Left lung (tissue), 14 donors: ENCODE measurements at regions of chr6 and their contacts with region 1.

Region 1: DNA sequence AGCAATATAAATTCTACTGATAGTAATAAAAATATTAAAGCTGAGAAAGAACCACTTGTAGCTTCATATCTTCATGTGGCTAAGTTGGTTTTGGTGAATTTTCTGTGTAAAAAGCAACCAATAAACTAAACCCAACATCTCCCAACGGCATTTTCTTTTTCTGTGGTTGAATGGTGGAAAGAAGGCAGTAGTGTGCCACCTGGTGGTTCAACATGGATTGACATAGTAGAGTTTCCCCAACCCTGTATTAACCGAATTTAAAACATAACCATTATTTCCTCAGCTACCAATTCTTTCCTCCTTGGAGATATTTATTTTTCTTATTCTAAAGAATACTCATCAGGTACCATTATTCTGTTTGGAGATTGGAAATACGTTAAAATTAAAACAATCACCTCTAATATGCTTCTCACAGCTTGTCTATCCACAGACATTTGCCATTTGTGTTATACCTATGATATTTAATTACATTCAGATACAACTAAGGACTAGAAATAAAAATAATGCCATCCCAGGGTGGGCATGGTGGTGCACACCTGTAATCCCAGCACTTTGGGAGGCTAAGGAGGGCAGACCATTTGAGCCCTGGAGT is 117.1 kb upstream of the EEF1E1 start:
- DNase-seq: peak in 2 of 4 donors; percentile 25 to 46
- ATAC-seq: peak; percentile 87
- H3K4me3 ChIP-seq: no peak overlapping the region
- H3K27ac ChIP-seq: no peak overlapping the region
- H3K4me1 ChIP-seq: no peaks in the 10 kb centered on the region
- H3K27me3 ChIP-seq: peaks cover 0 to 8% of the 10 kb centered on the region in 2 donors
- CTCF ChIP-seq: peak; percentile 71 to 77

Region 2: GRCh38 chr6:8054276-8054675 is 165.2 kb before region 1 on chr6:
- intact Hi-C with region 1: no loop called
- DNase-seq: no peak
- ATAC-seq: no peak
- H3K4me3 ChIP-seq: no peak overlapping the region
- H3K27ac ChIP-seq: no peak overlapping the region
- H3K4me1 ChIP-seq: no peaks in the 10 kb centered on the region
- H3K27me3 ChIP-seq: no peaks in the 10 kb centered on the region
- CTCF ChIP-seq: no peak

Region 3: GRCh38 chr6:8131256-8131897 is 88.1 kb before region 1 on chr6:
- intact Hi-C with region 1: loop called in 1 of 2 experiments (anchors 5 kb)
- DNase-seq: peak in 2 of 4 donors; percentile 29 to 66
- ATAC-seq: peak; percentile 98
- H3K4me3 ChIP-seq: no peak overlapping the region
- H3K27ac ChIP-seq: no peak overlapping the region
- H3K4me1 ChIP-seq: peaks cover 0 to 8% of the 10 kb centered on the region in 2 donors
- H3K27me3 ChIP-seq: peaks cover 0 to 4% of the 10 kb centered on the region in 2 donors
- CTCF ChIP-seq: peak; percentile 33 to 40